HepG2 (cell line): ENCODE measurements at regions of chr12 and their contacts with region 1.

Region 1: DNA sequence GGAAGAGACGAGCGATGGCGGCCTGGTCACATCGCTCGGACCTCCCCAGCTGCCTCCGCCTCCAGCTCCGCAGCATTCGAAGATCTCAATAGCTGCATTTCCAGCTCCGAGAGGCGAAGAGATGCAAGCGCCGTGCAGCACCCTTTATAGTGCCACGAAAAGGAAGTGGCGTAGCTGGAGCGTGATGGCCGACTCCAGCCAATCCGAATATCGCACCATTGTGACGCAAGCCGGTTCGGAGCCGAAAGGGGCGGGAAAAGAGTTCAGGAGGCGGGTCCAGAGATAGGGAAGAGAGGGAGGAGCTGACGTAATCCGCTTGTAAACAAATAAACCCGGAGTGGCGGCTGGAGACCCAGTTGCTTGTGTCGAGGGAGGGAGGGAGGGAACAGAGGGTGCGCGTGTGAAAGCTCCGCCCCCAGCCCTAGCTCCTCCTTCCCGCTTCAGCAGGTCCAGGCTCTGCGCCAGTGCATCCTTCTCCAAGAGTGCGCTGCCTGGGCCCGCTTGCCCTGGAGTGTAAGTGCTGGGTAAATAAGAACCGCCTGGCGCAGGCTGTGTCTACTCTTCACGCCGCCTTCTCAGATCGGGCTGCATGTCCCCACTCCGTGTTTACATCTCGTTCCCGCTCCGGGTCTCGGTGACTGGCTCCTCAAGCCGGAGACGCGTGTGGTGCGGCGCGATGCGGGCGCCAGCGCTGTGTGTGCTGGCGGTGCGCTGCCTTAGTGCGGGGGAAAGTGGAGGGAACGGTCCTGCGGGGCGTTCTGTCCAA is at the start of gene BTG1:
- DNase-seq: peak; percentile 98
- ATAC-seq: peak; percentile 86
- H3K4me3 ChIP-seq: peak within 1 kb of the TSS; percentile 94 to 99 (median 98)
- H3K27ac ChIP-seq: peak within 1 kb of the TSS; percentile 64
- H3K4me1 ChIP-seq: peaks cover 40% of the 10 kb centered on the region
- H3K27me3 ChIP-seq: peaks cover 0 to 3% of the 10 kb centered on the region in 2 experiments; a peak in 1 of 5 replicates
- CTCF ChIP-seq: 0 out of 2 replicates have a peak, but pooled peaks have one; percentile 11
- EP300 ChIP-seq: no peak
- POLR2A ChIP-seq: peak; percentile 98 to 100
- RAD21 ChIP-seq: 0 out of 2 replicates have a peak, but pooled peaks have one; percentile 21
- total RNA-seq, gene BTG1: 7.5 and 9.8 TPM in 2 replicates

Region 2: DNA sequence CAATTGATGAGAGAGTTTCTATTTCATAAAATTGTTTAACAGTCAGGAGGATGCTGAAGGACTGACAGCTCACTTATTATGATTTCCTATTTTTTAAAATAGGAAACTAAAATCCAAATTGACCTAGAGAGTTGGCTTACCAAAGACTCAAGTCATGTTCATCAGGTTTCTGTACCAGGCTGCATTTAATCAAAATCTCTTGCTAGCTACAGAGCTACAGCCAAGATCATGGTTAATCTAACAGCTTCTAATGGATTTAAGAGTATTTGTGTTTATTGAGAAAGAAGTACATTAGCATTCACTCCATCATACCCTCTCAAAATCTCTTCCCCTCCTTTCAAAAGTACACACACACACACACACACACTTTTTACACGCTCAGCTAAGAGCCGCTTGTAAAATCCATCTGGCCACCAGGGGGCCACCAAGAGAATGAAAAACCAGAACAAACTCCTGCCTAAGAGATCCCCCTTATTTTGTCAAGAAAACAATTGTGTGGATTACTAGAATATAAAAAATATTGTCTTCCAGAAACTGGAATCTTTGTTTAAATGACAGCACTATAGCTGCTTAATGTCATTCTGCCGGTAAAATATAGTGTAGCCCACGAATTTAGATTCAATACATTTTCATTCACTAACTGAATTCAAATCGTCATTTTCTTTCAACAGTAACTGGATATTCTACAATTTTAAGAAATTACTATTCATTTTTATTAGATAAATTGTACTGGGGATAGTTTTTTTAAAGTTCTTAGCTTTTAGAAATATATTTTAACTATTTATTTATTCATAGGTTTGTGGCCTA is 334.2 kb before region 1 on chr12:
- CTCF ChIA-PET with region 1: no interaction called
- POLR2A ChIA-PET with region 1: interaction called, 4 read pairs
- in situ Hi-C with region 1: loop called (anchors 10 kb)
- intact Hi-C with region 1: loop called (anchors 1 kb)
- DNase-seq: peak; percentile 42
- ATAC-seq: peak; percentile 58
- H3K4me3 ChIP-seq: no peak overlapping the region
- H3K27ac ChIP-seq: no peak overlapping the region
- H3K4me1 ChIP-seq: no peaks in the 10 kb centered on the region
- H3K27me3 ChIP-seq: no peaks in the 10 kb centered on the region
- CTCF ChIP-seq: peak; percentile 64
- EP300 ChIP-seq: no peak
- POLR2A ChIP-seq: no peak
- RAD21 ChIP-seq: 0 out of 2 replicates have a peak, but pooled peaks have one; percentile 34

Region 3: DNA sequence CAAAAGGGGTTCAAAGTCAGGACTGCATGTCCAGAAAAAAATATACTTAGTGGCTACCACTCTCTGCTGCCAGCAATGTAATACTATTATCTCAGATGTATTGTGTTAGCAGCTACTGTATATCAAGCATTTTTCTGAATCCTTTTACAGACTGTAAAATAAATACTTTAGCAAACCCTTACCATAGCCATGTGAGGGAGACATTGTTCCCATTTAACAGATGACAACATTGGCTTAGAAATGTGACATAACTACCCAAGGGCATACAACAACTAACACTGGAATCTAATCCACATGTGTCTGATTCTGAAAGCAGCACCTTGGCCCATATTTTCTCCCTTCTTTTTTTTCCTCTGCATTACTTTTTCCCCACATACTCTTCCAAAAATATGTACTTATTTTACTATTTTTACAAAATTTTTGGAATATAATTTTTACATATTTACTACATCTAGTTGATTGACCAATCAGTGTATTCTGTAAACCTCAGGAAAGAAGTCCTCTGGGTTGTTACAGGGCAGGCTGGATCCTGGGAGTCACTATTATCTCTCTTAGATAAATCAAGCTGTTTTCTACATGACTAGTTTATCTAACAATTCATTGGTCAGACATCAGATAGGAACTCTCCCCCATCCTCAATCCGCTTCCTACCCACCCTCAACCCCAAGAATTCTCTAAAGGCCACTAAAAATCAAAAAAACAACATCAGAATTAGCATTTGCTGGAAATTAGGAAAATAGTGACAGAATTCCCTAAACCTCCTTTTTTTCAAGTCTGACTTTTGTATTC is 154.3 kb before region 1 on chr12:
- CTCF ChIA-PET with region 1: no interaction called
- POLR2A ChIA-PET with region 1: no interaction called
- in situ Hi-C with region 1: no loop called
- intact Hi-C with region 1: loop called (anchors 1 kb)
- DNase-seq: no peak
- ATAC-seq: no peak
- H3K4me3 ChIP-seq: no peak overlapping the region
- H3K27ac ChIP-seq: no peak overlapping the region
- H3K4me1 ChIP-seq: no peaks in the 10 kb centered on the region
- H3K27me3 ChIP-seq: no peaks in the 10 kb centered on the region
- CTCF ChIP-seq: 0 out of 2 replicates have a peak, but pooled peaks have one; percentile 7
- EP300 ChIP-seq: no peak
- POLR2A ChIP-seq: no peak
- RAD21 ChIP-seq: no peak

Region 4: DNA sequence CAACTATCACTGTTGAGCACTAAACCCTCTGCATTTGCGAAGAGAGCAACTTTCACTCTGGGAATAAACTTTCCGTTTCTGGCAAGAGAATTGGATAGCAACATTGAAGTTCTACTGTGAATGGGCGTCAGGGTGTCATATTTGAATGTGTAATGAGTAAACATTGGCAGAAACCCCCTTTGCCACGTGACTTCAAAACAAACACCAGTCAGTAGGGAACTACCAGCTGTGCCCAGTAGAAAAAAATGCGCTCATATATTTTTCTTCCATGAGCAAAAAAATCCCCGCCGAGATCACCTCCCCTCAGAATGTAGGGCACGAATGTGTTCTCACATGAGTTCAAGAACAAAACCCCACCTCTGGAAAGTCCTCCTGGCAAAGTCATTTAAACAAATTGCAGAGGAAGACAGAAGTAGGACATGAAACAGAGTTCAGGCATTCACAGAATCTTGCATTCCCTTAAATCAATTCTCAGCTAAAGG is 80.9 kb before region 1 on chr12:
- CTCF ChIA-PET with region 1: no interaction called
- POLR2A ChIA-PET with region 1: interaction called, 73 read pairs
- in situ Hi-C with region 1: no loop called
- intact Hi-C with region 1: no loop called
- DNase-seq: peak; percentile 53
- ATAC-seq: peak; percentile 54
- H3K4me3 ChIP-seq: peak overlapping the region; percentile 21 to 38 (median 36); a peak in 3 of 6 replicates
- H3K27ac ChIP-seq: peak overlapping the region; percentile 28
- H3K4me1 ChIP-seq: peaks cover 64% of the 10 kb centered on the region
- H3K27me3 ChIP-seq: no peaks in the 10 kb centered on the region
- CTCF ChIP-seq: no peak
- EP300 ChIP-seq: no peak
- POLR2A ChIP-seq: no peak
- RAD21 ChIP-seq: no peak

Region 5: DNA sequence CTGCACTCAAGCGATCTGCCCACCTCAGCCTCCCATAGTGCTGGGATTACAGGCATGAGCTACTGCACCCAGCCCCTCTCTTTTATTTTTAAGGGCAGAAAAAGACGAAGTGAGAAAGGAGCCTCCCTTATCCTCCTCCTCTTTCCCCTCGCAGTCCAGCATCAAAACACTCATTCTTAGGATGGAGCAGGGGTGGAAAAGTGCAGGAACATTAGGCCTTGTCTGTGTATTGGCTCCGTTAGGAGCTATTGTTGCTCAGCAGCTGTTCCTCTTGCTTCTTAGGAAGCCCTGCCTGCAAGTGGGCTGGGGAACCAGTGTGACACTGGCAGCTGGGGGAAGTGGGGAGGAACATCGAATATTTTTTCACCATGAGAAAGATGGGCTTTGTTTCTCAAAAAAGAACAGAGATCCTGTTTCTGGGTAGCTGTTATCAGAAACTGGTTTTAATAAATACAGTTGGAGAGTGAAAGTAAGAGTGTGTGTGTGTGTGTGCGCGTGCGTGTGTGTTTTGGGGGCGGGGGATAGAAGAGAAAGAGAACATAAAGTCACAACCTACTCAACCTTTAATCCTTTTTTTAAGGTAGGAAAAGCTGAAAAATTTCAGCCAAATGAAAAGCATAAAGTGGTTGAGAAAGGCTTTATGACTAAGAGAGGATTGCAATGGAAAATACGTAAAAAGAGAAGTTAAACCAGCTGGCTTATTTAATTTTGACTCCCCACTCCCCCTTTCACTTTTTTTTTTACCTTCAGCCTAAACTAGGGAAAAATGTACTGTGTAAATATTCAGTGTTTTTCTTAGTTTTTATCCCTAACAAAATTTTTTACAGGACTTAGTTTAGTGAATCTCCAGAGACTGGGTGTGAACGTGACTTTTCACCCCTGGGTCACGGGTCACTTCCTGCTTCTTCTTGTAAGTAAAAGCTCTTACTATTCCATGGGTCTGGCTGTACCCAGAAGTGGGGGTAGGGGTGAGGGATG is 359.6 kb after region 1 on chr12:
- CTCF ChIA-PET with region 1: no interaction called
- POLR2A ChIA-PET with region 1: interaction called, 40 read pairs
- in situ Hi-C with region 1: no loop called
- intact Hi-C with region 1: no loop called
- DNase-seq: no peak
- ATAC-seq: peak; percentile 24; the same call in 1 of the 3 replicates
- H3K4me3 ChIP-seq: peak overlapping the region; percentile 37 to 67 (median 55)
- H3K27ac ChIP-seq: peak overlapping the region; percentile 58
- H3K4me1 ChIP-seq: peaks cover 53% of the 10 kb centered on the region
- H3K27me3 ChIP-seq: peaks cover 0 to 4% of the 10 kb centered on the region in 2 experiments; a peak in 1 of 5 replicates
- CTCF ChIP-seq: no peak
- EP300 ChIP-seq: no peak
- POLR2A ChIP-seq: no peak
- RAD21 ChIP-seq: no peak